ENCODE measurements at regions of chr2 and their contacts with region 1.

Region 1: GRCh38 chr2:147910990-147911473 is 66.2 kb downstream of the ACVR2A start:
- DNase-seq: peak in 2 of 10 donors; percentile 4 to 9

Region 2: GRCh38 chr2:146734042-146734820 is 1176.8 kb before region 1 on chr2:
- intact Hi-C with region 1: loop called (anchors 2 kb)
- DNase-seq: no peak

Region 3: DNA sequence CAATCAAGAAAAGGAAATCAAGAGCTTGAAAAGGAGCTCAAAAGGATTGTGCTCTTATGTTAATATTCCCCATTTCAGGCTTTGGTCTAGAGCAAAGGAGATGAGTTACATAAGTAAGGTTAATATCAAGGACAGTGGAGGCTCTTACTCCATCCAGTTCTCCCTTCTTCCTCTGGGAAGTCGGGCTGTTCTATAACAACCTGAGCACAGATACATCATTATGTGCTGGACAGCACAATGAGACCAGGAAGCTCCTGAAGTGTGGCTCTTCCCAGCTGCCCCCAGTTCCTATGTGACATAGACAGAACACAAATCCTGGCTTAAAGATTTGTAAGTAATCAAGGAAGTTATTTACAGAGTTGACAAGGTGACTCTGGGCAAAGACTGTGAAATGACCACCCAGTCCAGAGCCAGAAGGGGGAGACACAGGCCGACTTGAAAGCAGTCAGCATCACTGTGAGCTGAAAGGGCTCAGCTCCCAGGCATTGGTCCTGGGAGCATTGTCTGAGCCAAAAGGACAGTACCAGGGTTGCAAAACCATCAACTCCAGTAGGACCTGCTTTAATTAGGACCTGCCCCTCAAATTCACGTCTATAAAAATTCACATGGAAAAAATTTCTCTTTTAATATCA is 983.8 kb before region 1 on chr2:
- intact Hi-C with region 1: loop called (anchors 2 kb)
- DNase-seq: peak; percentile 10 to 90 (median 59)

Region 4: DNA sequence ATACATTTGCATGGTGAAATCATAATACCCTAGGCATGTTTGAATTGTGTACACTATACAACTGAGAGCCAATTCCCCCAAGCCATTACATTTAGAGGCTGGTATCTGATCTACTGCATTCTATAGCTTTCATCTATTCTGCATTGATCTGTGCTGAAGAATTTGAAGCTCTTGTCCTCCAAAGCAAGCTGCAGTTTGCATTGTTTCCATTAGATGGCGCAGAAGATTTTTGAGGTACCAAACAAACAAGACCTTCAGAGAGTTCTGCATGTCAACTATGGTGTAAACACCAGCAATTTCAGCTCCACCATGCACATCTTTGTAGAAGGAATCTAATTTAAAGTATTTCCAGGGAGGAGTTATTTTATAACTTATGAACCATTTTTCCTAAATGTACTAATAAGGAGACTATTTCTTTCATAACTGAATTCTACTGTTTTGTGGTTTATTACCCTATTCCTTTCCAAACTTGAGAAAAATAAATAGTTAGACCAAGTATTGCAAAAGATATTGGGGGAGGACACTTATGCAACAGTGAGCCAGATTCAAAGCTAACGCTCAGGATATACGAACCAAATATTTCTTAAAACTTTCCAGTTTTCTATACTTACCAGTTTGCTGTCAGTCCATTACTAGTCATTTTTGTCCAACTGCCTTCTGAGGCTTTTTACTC is 828.0 kb before region 1 on chr2:
- intact Hi-C with region 1: loop called (anchors 2 kb)
- DNase-seq: peak in 4 of 10 donors; percentile 28 to 57 (median 46)